Activated B cell treated with CpG ODN at 0.5 μM for 24 hours (primary cell): ENCODE measurements at regions of chr11 and their contacts with region 1.

Region 1: GRCh38 chr11:102346748-102347461 is at the start of gene BIRC2:
- DNase-seq: peak; percentile 98
- ATAC-seq: peak; percentile 86
- H3K4me3 Mint-ChIP-seq: peak within 1 kb of the TSS; percentile 93
- H3K27ac Mint-ChIP-seq: peak within 1 kb of the TSS; percentile 95
- H3K4me1 Mint-ChIP-seq: peaks cover 38% of the 10 kb centered on the region
- H3K27me3 Mint-ChIP-seq: no peaks in the 10 kb centered on the region
- CTCF ChIP-seq: no peak
- total RNA-seq, gene BIRC2: 27.1 and 34.9 TPM in 2 replicates

Region 2: GRCh38 chr11:101914738-101915426 is 432.0 kb before region 1 on chr11 and contains the start of gene CEP126:
- CTCF ChIA-PET with region 1: no interaction called
- POLR2A ChIA-PET with region 1: no interaction called
- intact Hi-C with region 1: loop called (anchors 2 kb)
- DNase-seq: peak; percentile 98
- ATAC-seq: peak; percentile 90
- H3K4me3 Mint-ChIP-seq: peak within 1 kb of the TSS; percentile 94
- H3K27ac Mint-ChIP-seq: peak within 1 kb of the TSS; percentile 95
- H3K4me1 Mint-ChIP-seq: peaks cover 27% of the 10 kb centered on the region
- H3K27me3 Mint-ChIP-seq: peaks cover 10% of the 10 kb centered on the region
- CTCF ChIP-seq: no peak
- total RNA-seq, gene CEP126: 1.4 and 1.5 TPM in 2 replicates

Region 3: DNA sequence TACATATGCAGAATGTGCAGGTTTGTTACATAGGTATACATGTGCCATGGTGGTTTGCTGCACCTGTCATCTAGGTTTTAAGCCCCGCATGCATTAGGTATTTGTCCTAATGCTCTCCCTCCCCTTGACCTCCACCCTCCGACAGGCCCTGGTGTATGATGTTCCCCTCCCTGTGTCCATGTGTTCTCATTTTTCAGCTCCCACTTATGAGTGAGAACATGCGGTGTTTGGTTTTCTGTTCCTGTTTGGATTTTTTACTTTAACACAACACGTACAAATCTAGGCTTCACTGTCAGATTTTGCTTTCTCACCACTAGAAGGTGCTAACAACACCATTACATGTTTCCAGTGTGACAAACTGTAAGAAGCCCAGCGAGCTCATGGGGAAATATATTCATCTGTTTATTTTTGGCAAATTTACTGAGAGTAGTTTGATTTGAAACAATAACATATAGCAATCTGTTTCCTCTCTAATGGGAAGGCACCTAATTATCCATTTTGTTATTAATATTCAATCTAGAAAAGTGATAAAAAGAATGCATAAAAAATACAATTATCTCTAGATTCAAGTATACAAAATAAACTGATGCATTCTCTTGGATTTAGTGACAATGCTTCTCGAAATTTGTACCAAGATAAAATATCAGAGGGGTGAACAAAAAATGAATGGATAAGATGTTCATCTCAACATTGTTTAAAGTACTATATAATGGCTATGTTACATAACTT is 52.9 kb before region 1 on chr11:
- CTCF ChIA-PET with region 1: interaction called, 33 read pairs
- POLR2A ChIA-PET with region 1: interaction called, 9 read pairs
- intact Hi-C with region 1: loop called (anchors 1 kb)
- DNase-seq: peak; percentile 26
- ATAC-seq: peak; percentile 91
- H3K4me3 Mint-ChIP-seq: peak overlapping the region; percentile 84
- H3K27ac Mint-ChIP-seq: peak overlapping the region; percentile 94
- H3K4me1 Mint-ChIP-seq: peaks cover 72% of the 10 kb centered on the region
- H3K27me3 Mint-ChIP-seq: no peaks in the 10 kb centered on the region
- CTCF ChIP-seq: no peak

Region 4: DNA sequence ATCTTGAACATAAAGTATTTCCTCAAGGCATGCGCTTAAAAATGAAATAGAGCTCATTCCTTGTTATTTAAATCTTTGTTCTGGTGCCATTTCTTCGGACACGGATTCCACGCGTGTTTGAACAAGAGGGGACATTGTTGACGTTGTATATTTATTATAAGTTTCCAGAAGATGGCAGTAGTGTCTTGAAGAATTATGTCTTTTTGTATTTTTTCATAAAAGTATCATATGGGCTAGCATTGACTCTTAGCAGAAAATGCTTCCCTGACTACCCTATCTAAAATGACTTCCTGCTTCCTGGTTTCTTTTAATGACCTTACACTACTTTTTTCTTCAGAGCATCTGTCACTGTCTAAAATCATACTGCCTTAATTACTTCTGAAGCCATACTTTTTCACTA is 20.5 kb after region 1 on chr11:
- CTCF ChIA-PET with region 1: interaction called, 11 read pairs
- POLR2A ChIA-PET with region 1: no interaction called
- intact Hi-C with region 1: no loop called
- DNase-seq: no peak
- ATAC-seq: no peak
- H3K4me3 Mint-ChIP-seq: no peak overlapping the region
- H3K27ac Mint-ChIP-seq: peak overlapping the region; percentile 21
- H3K4me1 Mint-ChIP-seq: peaks cover 14% of the 10 kb centered on the region
- H3K27me3 Mint-ChIP-seq: no peaks in the 10 kb centered on the region
- CTCF ChIP-seq: no peak

Region 5: GRCh38 chr11:102430158-102430836 is 83.4 kb after region 1 on chr11:
- CTCF ChIA-PET with region 1: interaction called, 3 read pairs
- POLR2A ChIA-PET with region 1: interaction called, 3 read pairs
- intact Hi-C with region 1: loop called (anchors 1 kb)
- DNase-seq: no peak
- ATAC-seq: peak; percentile 84
- H3K4me3 Mint-ChIP-seq: peak overlapping the region; percentile 39
- H3K27ac Mint-ChIP-seq: peak overlapping the region; percentile 72
- H3K4me1 Mint-ChIP-seq: peaks cover 56% of the 10 kb centered on the region
- H3K27me3 Mint-ChIP-seq: no peaks in the 10 kb centered on the region
- CTCF ChIP-seq: no peak

Region 6: DNA sequence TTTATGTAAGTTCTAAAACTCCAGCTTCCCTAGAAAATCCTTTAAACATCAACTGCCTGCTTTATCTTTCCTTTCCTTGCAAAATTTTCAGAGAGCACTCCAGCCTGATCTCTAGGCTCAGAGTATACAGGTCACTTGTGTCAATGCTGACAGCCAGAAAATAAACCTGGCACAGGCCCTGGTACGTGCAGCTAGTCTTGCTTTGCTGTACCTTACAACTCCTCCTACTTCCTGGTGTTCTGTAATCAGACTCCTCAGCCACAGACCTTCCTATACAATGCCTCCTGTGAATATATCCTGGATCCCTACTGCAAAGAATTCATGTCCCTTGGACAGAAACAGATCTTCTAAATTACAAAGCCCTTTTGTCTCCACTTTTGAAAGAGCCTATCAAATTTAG is 129.9 kb after region 1 on chr11:
- CTCF ChIA-PET with region 1: no interaction called
- POLR2A ChIA-PET with region 1: interaction called, 3 read pairs
- intact Hi-C with region 1: loop called (anchors 1 kb)
- DNase-seq: no peak
- ATAC-seq: no peak
- H3K4me3 Mint-ChIP-seq: peak overlapping the region; percentile 17
- H3K27ac Mint-ChIP-seq: peak overlapping the region; percentile 65
- H3K4me1 Mint-ChIP-seq: peaks cover 47% of the 10 kb centered on the region
- H3K27me3 Mint-ChIP-seq: no peaks in the 10 kb centered on the region
- CTCF ChIP-seq: no peak

Region 7: GRCh38 chr11:102666331-102666957 is 319.5 kb after region 1 on chr11:
- CTCF ChIA-PET with region 1: interaction called, 56 read pairs
- POLR2A ChIA-PET with region 1: interaction called, 3 read pairs
- intact Hi-C with region 1: loop called (anchors 1 kb)
- DNase-seq: no peak
- ATAC-seq: peak; percentile 54
- H3K4me3 Mint-ChIP-seq: no peak overlapping the region
- H3K27ac Mint-ChIP-seq: no peak overlapping the region
- H3K4me1 Mint-ChIP-seq: peaks cover 3% of the 10 kb centered on the region
- H3K27me3 Mint-ChIP-seq: no peaks in the 10 kb centered on the region
- CTCF ChIP-seq: no peak